ENCODE measurements at regions of chr19 and their contacts with region 1.

Region 1: GRCh38 chr19:58154679-58155648 is 4.4 kb upstream of the ZNF329 start:
- DNase-seq: peak; percentile 81 to 99
- H3K4me3 ChIP-seq: peak overlapping the region; percentile 91
- H3K27ac ChIP-seq: peak overlapping the region; percentile 12; the same call in 1 of the 2 replicates
- H3K4me1 ChIP-seq: no peaks in the 10 kb centered on the region
- H3K27me3 ChIP-seq: no peaks in the 10 kb centered on the region
- CTCF ChIP-seq: peak; percentile 99

Region 2: DNA sequence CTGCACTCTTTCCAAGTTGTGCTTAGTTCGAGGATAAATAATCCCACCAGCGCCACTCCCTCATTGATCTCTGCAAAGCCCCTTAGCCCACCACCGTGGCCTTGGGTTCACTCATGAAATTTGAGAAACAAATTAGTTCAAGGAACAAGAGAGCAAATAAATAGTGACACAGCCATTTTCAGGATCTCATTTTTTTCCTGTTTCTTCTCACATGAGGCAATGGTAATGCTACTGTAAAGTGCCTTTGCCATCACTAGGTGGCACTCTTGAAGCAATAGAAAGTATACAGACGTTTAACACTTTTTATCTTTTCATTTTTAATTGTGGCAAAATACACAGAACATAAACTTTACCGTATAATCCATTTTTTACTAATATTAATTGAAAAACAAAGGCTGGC is 1406.6 kb before region 1 on chr19:
- CTCF ChIA-PET with region 1: no interaction called
- POLR2A ChIA-PET with region 1: no interaction called
- intact Hi-C with region 1: loop called (anchors 2 kb)
- DNase-seq: peak in 1 of 2 experiments; percentile 51
- H3K4me3 ChIP-seq: no peak overlapping the region
- H3K27ac ChIP-seq: no peak overlapping the region
- H3K4me1 ChIP-seq: no peaks in the 10 kb centered on the region
- H3K27me3 ChIP-seq: peaks cover 4% of the 10 kb centered on the region; the same call in 1 of the 2 replicates
- CTCF ChIP-seq: peak; percentile 67

Region 3: DNA sequence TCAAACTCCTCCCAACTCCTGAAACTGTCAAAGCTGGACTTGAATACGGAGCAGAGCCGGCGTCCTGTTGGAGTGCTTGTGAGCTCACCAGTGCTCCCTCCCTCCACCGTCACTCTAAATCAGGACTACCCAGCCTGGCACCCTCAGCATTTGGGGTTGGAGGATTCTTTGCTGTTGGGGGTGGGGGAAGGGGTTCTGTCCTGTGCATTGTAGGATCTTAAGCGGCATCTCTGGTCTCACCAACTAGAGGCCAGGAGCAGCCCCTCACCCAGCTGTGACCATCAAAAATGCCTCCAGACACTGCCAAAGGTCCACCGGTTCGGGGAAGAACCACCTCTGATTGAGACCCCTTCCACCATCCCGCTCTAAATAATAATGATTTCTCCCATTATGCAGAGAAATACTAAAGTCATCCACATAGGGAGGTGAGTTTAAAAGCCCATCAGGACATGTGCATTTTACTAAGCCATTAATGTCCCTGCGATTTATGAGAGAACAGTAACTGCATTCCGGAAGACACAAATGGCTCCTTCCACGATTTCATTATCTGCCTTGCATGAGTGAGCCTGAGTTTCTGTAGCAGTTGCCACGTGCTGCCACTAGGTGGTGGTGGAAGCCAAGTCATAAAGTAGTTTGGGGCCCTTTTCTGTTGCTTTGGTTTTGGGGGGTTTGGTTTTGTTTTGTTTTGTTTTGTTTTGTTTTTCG is 1051.2 kb before region 1 on chr19:
- CTCF ChIA-PET with region 1: no interaction called
- POLR2A ChIA-PET with region 1: no interaction called
- intact Hi-C with region 1: loop called (anchors 1 kb)
- DNase-seq: peak; percentile 35 to 49
- H3K4me3 ChIP-seq: peak overlapping the region; percentile 3; the same call in 1 of the 2 replicates
- H3K27ac ChIP-seq: no peak overlapping the region
- H3K4me1 ChIP-seq: no peaks in the 10 kb centered on the region
- H3K27me3 ChIP-seq: no peaks in the 10 kb centered on the region
- CTCF ChIP-seq: peak; percentile 91

Region 4: DNA sequence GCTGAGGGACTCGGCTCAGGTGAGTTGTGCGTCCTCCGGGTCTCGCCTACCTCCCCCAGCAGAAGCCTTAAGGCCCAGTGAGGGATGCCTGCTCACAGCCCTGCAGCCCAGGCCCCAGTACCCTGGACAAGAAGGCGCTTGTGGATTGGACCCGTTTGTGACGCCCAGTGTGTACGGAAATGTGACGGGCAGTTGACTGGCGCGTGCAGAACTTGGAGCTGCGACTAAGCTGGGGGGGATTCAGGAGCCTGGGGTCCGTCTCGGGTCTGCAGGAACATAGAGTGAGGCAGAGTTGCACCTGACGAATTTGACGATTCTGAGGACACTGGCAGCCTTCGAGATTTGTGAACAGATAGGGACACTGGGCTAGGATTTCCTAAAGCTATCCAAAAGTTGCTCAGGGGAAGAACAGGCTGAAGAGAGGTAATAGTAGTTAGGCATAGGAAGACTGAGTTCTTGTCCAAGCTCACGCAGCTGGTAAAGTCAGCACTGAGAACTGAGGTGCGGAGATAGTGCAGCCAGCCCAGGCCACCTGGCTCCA is 472.7 kb before region 1 on chr19:
- CTCF ChIA-PET with region 1: no interaction called
- POLR2A ChIA-PET with region 1: interaction called, 10 read pairs
- intact Hi-C with region 1: no loop called
- DNase-seq: no peak
- H3K4me3 ChIP-seq: peak overlapping the region; percentile 85
- H3K27ac ChIP-seq: no peak overlapping the region
- H3K4me1 ChIP-seq: 0 out of 2 replicates have a peak, but pooled peaks cover 7% of the 10 kb centered on the region
- H3K27me3 ChIP-seq: no peaks in the 10 kb centered on the region
- CTCF ChIP-seq: no peak

Region 5: GRCh38 chr19:57947208-57948134 is 207.5 kb before region 1 on chr19 and contains the start of gene ZNF256:
- CTCF ChIA-PET with region 1: no interaction called
- POLR2A ChIA-PET with region 1: no interaction called
- intact Hi-C with region 1: loop called (anchors 1 kb)
- DNase-seq: peak; percentile 86 to 96
- H3K4me3 ChIP-seq: peak within 1 kb of the TSS; percentile 91
- H3K27ac ChIP-seq: peak within 1 kb of the TSS; percentile 35; the same call in 1 of the 2 replicates
- H3K4me1 ChIP-seq: peaks cover 9% of the 10 kb centered on the region
- H3K27me3 ChIP-seq: 0 out of 2 replicates have a peak, but pooled peaks cover 4% of the 10 kb centered on the region
- CTCF ChIP-seq: peak; percentile 63
- total RNA-seq, gene ZNF256: 6.3 and 6.4 TPM in 2 replicates

Region 6: GRCh38 chr19:58021541-58022282 is 133.3 kb before region 1 on chr19:
- CTCF ChIA-PET with region 1: no interaction called
- POLR2A ChIA-PET with region 1: no interaction called
- intact Hi-C with region 1: no loop called
- DNase-seq: peak; percentile 23 to 41
- H3K4me3 ChIP-seq: no peak overlapping the region
- H3K27ac ChIP-seq: no peak overlapping the region
- H3K4me1 ChIP-seq: no peaks in the 10 kb centered on the region
- H3K27me3 ChIP-seq: peaks cover 18% of the 10 kb centered on the region
- CTCF ChIP-seq: peak; percentile 59

Region 7: DNA sequence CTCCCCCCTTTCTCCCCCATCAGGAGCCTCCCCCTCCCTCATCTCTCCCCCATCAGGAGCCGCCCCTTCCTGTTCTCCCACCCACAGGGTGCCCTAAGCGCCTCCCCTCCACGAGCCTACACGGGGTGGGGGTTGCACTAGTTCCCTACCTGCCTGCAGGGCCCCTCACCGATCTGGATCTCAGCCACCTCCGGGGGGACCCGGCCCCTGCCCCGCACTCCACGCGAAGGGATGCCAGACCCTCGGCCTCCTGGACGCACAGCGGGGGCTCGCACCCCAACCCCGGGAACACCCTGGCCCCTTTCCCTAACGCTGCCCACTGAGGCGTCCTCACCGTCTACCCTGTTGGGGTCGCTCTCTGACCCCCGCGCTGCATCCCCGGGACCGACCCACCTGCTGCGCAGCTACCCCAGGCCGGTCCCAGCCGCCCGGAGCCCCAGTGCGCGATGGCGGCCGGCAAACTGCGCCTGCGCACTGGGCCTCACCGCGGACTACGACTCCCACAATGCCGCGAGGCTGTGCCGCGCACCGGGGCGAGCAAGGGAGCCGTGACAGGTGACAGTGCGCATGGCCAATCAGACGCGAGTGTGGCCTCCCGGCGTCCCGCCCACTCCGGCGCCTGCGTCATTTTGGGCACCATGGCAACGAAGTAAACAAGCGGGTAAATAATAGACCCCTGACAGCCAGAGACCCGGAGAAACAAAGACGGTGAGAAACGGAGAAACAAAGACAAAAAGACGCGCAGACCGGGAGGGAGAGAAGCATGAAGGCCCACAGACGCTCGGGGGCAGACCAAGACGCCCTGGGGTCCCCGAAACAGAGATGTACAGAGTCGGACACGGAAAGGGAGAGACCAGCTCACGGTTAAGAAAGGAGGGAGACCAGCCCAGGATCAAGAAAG is 56.9 kb before region 1 on chr19 and contains the start of gene ZSCAN18:
- CTCF ChIA-PET with region 1: no interaction called
- POLR2A ChIA-PET with region 1: no interaction called
- intact Hi-C with region 1: loop called (anchors 1 kb)
- DNase-seq: peak; percentile 96 to 99
- H3K4me3 ChIP-seq: peak within 1 kb of the TSS; percentile 71
- H3K27ac ChIP-seq: no peak within 1 kb of the TSS
- H3K4me1 ChIP-seq: no peaks in the 10 kb centered on the region
- H3K27me3 ChIP-seq: no peaks in the 10 kb centered on the region
- CTCF ChIP-seq: no peak
- total RNA-seq, gene ZSCAN18: 76.3 and 90.5 TPM in 2 replicates

Measured in PC-9 (cell line).